ENCODE measurements at regions of chr18 and their contacts with region 1.

Region 1: GRCh38 chr18:58761241-58761969 is 90.1 kb downstream of the MALT1 start:
- DNase-seq: no peak
- H3K4me3 ChIP-seq: no peak overlapping the region
- H3K27ac ChIP-seq: no peak overlapping the region
- H3K27me3 ChIP-seq: peaks cover 0 to 15% (median 0%) of the 10 kb centered on the region in 45 donors
- CTCF ChIP-seq: no peak

Region 2: GRCh38 chr18:58529714-58530354 is 231.6 kb before region 1 on chr18:
- intact Hi-C with region 1: loop called (anchors 5 kb)
- DNase-seq: peak in 4 of 10 donors; percentile 36 to 54 (median 42)
- H3K4me3 ChIP-seq: no peak overlapping the region
- H3K27ac ChIP-seq: no peak overlapping the region
- H3K27me3 ChIP-seq: peaks cover 0 to 7% (median 0%) of the 10 kb centered on the region in 45 donors
- CTCF ChIP-seq: peak in 55 of 56 donors; percentile 16 to 78 (median 59)

Region 3: DNA sequence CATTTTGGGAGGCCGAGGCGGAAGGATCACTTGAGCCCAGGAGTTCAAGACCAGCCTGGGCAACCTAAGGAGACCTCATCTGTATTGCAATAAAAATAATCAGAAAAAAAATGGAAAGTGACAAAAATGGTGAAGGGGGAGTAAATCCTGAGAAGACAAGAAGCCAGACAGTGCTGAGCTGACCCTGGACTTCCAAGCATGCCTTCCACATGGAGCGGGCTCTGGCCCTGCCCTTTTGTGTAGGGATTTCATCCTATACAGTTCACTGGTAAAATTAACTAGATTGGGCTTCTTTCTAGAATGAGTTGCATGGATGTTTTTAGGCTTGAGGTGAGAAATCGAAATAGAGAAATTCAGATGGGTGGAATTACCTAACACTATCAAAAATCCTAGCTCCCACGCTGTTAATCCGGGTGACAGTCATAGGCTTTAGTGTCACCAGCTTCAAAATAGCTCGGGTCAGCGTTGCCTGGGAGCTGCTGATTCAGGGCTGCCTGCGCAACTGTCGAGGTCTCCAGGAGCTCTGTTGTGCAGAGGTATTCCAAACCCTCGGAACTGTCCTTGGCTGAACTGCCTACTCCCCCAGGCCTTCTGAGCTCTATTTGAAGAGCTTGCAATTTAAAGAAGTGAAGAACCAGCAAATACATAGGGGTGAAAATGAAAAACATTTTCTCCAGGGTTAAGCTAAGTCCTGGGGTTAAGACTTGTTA is 81.7 kb after region 1 on chr18:
- intact Hi-C with region 1: no loop called
- DNase-seq: peak in 5 of 10 donors; percentile 33 to 61 (median 43)
- H3K4me3 ChIP-seq: no peak overlapping the region
- H3K27ac ChIP-seq: peak overlapping the region in 45 of 59 donors; percentile 0 to 76 (median 42)
- H3K27me3 ChIP-seq: no peaks in the 10 kb centered on the region
- CTCF ChIP-seq: no peak